Calu3 (cell line): ENCODE measurements at regions of chr1 and their contacts with region 1.

Region 1: DNA sequence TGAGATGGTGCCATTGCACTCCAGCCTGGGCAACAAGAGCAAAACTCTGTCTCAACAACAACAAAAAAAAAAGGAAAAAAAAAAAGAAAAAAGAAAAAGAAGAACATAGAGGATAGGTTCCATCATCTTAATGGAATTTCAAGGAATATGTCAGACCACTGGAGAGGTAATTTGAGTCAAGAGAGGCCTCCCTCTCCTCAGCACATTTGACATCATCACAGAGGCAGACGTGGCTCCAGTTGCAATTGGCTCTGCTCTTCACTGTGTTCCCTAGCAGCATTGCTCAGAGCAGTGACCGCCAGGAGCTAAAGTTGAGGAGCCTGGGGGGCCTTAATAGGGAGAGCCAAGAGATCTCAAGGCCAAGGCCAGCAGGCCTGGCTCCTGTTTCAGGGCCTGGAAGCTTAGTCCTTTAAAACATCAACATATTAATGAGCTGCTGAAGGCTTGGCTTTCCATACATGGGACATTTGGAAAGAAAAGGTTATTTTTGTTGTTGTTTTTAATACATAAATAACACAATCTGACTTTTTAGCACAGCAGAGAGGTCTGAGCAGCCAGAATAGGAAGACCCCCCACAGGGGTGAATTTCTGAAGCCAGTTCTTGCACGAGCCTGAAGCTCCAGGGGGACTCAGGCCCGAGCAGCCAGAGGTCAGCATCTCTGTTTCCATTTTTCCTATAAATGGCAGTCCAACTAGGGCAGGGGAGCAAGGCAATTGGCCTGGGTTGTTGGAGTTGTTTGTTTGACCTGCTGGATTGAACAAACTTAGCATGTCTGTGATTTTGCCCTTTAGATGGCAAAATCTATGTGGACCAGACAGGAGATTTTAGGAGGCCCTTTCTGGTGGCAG is 118.3 kb upstream of the FGGY start:
- DNase-seq: no peak
- H3K4me3 Mint-ChIP-seq: no peak overlapping the region
- H3K27ac Mint-ChIP-seq: no peak overlapping the region
- H3K4me1 Mint-ChIP-seq: peaks cover 6% of the 10 kb centered on the region
- H3K27me3 Mint-ChIP-seq: no peaks in the 10 kb centered on the region
- CTCF ChIP-seq: no peak

Region 2: GRCh38 chr1:59132195-59132753 is 46.3 kb before region 1 on chr1:
- CTCF ChIA-PET with region 1: no interaction called
- intact Hi-C with region 1: loop called (anchors 1 kb)
- DNase-seq: no peak
- H3K4me3 Mint-ChIP-seq: no peak overlapping the region
- H3K27ac Mint-ChIP-seq: no peak overlapping the region
- H3K4me1 Mint-ChIP-seq: peaks cover 49% of the 10 kb centered on the region
- H3K27me3 Mint-ChIP-seq: no peaks in the 10 kb centered on the region
- CTCF ChIP-seq: no peak